ENCODE measurements at regions of chr9 and their contacts with region 1.

Region 1: GRCh38 chr9:114538241-114538640 is 33.0 kb upstream of the WHRN start:
- DNase-seq: peak; percentile 19
- ATAC-seq: peak; percentile 100
- H3K4me3 Mint-ChIP-seq: no peak overlapping the region
- H3K27ac Mint-ChIP-seq: no peak overlapping the region
- H3K4me1 Mint-ChIP-seq: peaks cover 22% of the 10 kb centered on the region
- H3K27me3 Mint-ChIP-seq: no peaks in the 10 kb centered on the region
- CTCF ChIP-seq: no peak

Region 2: GRCh38 chr9:114434878-114435311 is 103.3 kb before region 1 on chr9:
- CTCF ChIA-PET with region 1: interaction called, 8 read pairs
- POLR2A ChIA-PET with region 1: no interaction called
- intact Hi-C with region 1: loop called (anchors 1 kb)
- DNase-seq: no peak
- ATAC-seq: peak; percentile 81
- H3K4me3 Mint-ChIP-seq: no peak overlapping the region
- H3K27ac Mint-ChIP-seq: no peak overlapping the region
- H3K4me1 Mint-ChIP-seq: no peaks in the 10 kb centered on the region
- H3K27me3 Mint-ChIP-seq: no peaks in the 10 kb centered on the region
- CTCF ChIP-seq: no peak

Region 3: DNA sequence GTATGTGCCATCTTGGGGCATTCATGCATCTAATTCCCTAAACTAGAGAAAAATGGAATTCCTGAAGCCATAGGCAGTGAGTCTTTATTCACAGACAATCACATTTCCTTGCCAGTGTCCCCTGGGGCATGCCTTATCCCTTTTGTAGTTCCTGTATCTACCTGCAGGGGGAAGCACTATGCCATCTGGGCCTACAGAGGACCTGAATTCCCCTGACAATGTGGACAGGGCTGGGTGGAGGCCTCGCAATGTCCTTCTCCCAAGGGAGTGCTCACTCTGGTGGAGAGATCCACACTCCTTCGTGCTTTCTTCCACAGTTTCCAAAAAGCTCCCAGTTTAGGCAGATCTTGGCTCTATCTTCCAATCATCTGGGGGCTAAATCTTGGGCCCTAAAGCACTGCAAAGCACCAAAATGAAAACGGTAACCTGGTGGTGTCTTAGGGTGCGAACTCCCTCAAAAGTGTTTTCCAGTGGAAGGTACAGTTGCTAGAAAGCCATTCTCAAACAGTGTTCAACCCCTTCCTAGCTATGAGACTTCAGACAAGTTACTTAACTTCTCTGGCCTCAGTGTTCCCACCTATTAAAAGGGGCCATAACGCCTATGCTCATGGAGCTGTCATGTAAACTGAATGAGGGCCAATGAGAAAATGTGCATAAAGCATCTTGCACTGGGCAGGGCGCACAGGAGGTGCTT is 50.5 kb before region 1 on chr9:
- CTCF ChIA-PET with region 1: interaction called, 3 read pairs
- POLR2A ChIA-PET with region 1: no interaction called
- intact Hi-C with region 1: loop called (anchors 5 kb)
- DNase-seq: no peak
- ATAC-seq: peak; percentile 85
- H3K4me3 Mint-ChIP-seq: no peak overlapping the region
- H3K27ac Mint-ChIP-seq: no peak overlapping the region
- H3K4me1 Mint-ChIP-seq: peaks cover 39% of the 10 kb centered on the region
- H3K27me3 Mint-ChIP-seq: no peaks in the 10 kb centered on the region
- CTCF ChIP-seq: peak; percentile 41

Region 4: GRCh38 chr9:114560956-114561355 is 22.7 kb after region 1 on chr9:
- CTCF ChIA-PET with region 1: interaction called, 7 read pairs
- POLR2A ChIA-PET with region 1: interaction called, 6 read pairs
- intact Hi-C with region 1: loop called (anchors 2 kb)
- DNase-seq: no peak
- ATAC-seq: no peak
- H3K4me3 Mint-ChIP-seq: no peak overlapping the region
- H3K27ac Mint-ChIP-seq: no peak overlapping the region
- H3K4me1 Mint-ChIP-seq: peaks cover 51% of the 10 kb centered on the region
- H3K27me3 Mint-ChIP-seq: no peaks in the 10 kb centered on the region
- CTCF ChIP-seq: no peak

Region 5: GRCh38 chr9:114616653-114617520 is 78.6 kb after region 1 on chr9:
- CTCF ChIA-PET with region 1: interaction called, 4 read pairs
- POLR2A ChIA-PET with region 1: no interaction called
- intact Hi-C with region 1: loop called (anchors 1 kb)
- DNase-seq: peak; percentile 73
- ATAC-seq: peak; percentile 76
- H3K4me3 Mint-ChIP-seq: peak overlapping the region; percentile 74
- H3K27ac Mint-ChIP-seq: peak overlapping the region; percentile 98
- H3K4me1 Mint-ChIP-seq: peaks cover 83% of the 10 kb centered on the region
- H3K27me3 Mint-ChIP-seq: no peaks in the 10 kb centered on the region
- CTCF ChIP-seq: no peak

Region 6: GRCh38 chr9:114681594-114682332 is 143.5 kb after region 1 on chr9 and contains the start of gene TEX48:
- CTCF ChIA-PET with region 1: no interaction called
- POLR2A ChIA-PET with region 1: no interaction called
- intact Hi-C with region 1: no loop called
- DNase-seq: no peak
- ATAC-seq: peak; percentile 94
- H3K4me3 Mint-ChIP-seq: no peak within 1 kb of the TSS
- H3K27ac Mint-ChIP-seq: peak within 1 kb of the TSS; percentile 36
- H3K4me1 Mint-ChIP-seq: peaks cover 5% of the 10 kb centered on the region
- H3K27me3 Mint-ChIP-seq: peaks cover 24% of the 10 kb centered on the region
- CTCF ChIP-seq: no peak
- total RNA-seq, gene TEX48: not detected in 2 replicates